Left colon (tissue), 2 donors: ENCODE measurements at regions of chrX and their contacts with region 1.

Region 1: GRCh38 chrX:114210879-114211278 is 373.0 kb upstream of the HTR2C start:
- DNase-seq: no peak
- ATAC-seq: no peak

Region 2: GRCh38 chrX:114152130-114152529 is 58.7 kb before region 1 on chrX:
- intact Hi-C with region 1: loop called in 1 of 2 experiments (anchors 10 kb)
- DNase-seq: no peak
- ATAC-seq: no peak